CD4-positive, alpha-beta T cell (primary cell): ENCODE measurements at regions of chr4 and their contacts with region 1.

Region 1: GRCh38 chr4:129093191-129093920 is at the start of gene SCLT1:
- DNase-seq: peak; percentile 87 to 98 (median 93)
- ATAC-seq: peak; percentile 90
- H3K4me3 ChIP-seq: peak within 1 kb of the TSS; percentile 88
- H3K4me3 Mint-ChIP-seq: no peak within 1 kb of the TSS
- H3K27ac ChIP-seq: peak within 1 kb of the TSS; percentile 92 to 97
- H3K27ac Mint-ChIP-seq: no peak within 1 kb of the TSS
- H3K4me1 ChIP-seq: peaks cover 16% of the 10 kb centered on the region
- H3K4me1 Mint-ChIP-seq: peaks cover 45% of the 10 kb centered on the region
- H3K27me3 ChIP-seq: no peaks in the 10 kb centered on the region
- H3K27me3 Mint-ChIP-seq: no peaks in the 10 kb centered on the region
- CTCF ChIP-seq: no peak
- total RNA-seq, gene SCLT1: 21.8 to 21.9 TPM

Region 2: DNA sequence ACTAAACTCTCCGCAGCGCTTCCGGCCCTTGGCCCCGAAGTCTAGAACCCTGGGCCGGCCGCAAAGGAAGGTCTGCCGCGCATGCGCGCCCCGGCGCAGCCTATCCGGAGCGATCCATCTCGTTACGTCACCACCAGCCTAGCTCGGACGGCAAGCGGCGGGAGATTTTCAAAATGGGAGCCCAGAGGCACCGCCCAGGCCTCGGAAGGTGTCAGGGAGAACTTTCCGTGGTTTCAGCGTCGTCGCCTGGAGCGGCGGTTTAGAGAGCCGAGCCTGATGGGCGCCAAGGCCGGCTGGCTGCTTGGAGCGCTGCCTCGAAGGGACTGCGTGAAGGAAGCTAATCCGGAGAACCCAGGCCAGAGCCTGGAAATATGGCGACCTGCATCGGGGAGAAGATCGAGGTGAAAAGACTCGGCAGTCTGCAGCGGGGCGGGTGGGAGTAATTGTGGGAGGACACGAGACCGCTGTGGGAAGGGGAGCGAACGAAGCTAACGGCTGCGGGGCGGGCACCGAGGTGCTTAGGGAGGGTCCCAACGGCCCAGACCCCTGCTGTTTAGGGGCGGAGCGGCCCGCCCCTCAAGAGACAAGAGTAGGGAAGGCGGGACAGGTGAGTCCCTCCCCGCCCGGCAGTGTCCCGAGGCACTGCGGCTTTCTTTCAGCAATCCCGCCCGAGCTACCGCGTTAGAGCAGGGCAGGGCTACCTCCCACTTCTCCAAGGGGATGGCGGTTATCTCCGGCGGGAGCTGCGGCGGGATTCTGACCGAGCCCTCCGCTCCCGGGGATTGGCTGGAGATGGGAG is 1212.4 kb before region 1 on chr4 and contains the start of gene PLK4:
- CTCF ChIA-PET with region 1: no interaction called
- POLR2A ChIA-PET with region 1: no interaction called
- intact Hi-C with region 1: loop called in 1 of 2 experiments (anchors 5 kb)
- DNase-seq: peak; percentile 86 to 97 (median 92)
- ATAC-seq: peak; percentile 89
- H3K4me3 ChIP-seq: peak within 1 kb of the TSS; percentile 80
- H3K4me3 Mint-ChIP-seq: peak within 1 kb of the TSS; percentile 95
- H3K27ac ChIP-seq: peak within 1 kb of the TSS; percentile 73 to 76
- H3K27ac Mint-ChIP-seq: peak within 1 kb of the TSS; percentile 99
- H3K4me1 ChIP-seq: peaks cover 11% of the 10 kb centered on the region
- H3K4me1 Mint-ChIP-seq: peaks cover 29% of the 10 kb centered on the region
- H3K27me3 ChIP-seq: no peaks in the 10 kb centered on the region
- H3K27me3 Mint-ChIP-seq: no peaks in the 10 kb centered on the region
- CTCF ChIP-seq: no peak
- total RNA-seq, gene PLK4: 2.7 to 3.4 TPM

Region 3: GRCh38 chr4:128060699-128061565 is 1032.4 kb before region 1 on chr4 and contains the start of gene LARP1B:
- CTCF ChIA-PET with region 1: no interaction called
- POLR2A ChIA-PET with region 1: interaction called, 6 read pairs
- intact Hi-C with region 1: loop called in 1 of 2 experiments (anchors 2 kb)
- DNase-seq: peak; percentile 81 to 96 (median 90)
- ATAC-seq: peak; percentile 89
- H3K4me3 ChIP-seq: peak within 1 kb of the TSS; percentile 64
- H3K4me3 Mint-ChIP-seq: peak within 1 kb of the TSS; percentile 93
- H3K27ac ChIP-seq: peak within 1 kb of the TSS; percentile 60 to 70
- H3K27ac Mint-ChIP-seq: peak within 1 kb of the TSS; percentile 89
- H3K4me1 ChIP-seq: peaks cover 23% of the 10 kb centered on the region
- H3K4me1 Mint-ChIP-seq: peaks cover 6% of the 10 kb centered on the region
- H3K27me3 ChIP-seq: no peaks in the 10 kb centered on the region
- H3K27me3 Mint-ChIP-seq: no peaks in the 10 kb centered on the region
- CTCF ChIP-seq: no peak
- total RNA-seq, gene LARP1B: 8.4 to 8.9 TPM

Region 4: DNA sequence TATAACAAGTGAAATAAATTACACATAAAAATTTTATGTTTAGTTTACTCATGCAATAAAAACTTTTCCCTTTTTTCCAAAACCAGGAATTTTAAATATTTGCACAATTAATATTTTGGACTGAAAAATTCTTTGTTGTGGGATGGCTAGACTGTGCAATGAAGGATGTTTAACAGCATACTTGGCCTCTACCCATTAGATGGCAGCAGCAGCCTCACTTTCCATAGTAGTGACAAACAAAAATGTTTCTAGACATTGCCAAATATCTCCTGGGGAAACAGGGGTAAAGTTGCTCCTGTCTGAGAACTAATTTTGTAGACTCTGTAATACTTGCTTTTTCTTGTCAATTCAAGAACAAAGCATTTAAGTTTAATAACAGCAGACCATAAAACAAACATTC is 49.8 kb before region 1 on chr4:
- CTCF ChIA-PET with region 1: no interaction called
- POLR2A ChIA-PET with region 1: interaction called, 3 read pairs
- intact Hi-C with region 1: loop called in 1 of 2 experiments (anchors 10 kb)
- DNase-seq: peak in 2 of 14 experiments; percentile 6 to 13
- ATAC-seq: no peak
- H3K4me3 ChIP-seq: no peak overlapping the region
- H3K4me3 Mint-ChIP-seq: no peak overlapping the region
- H3K27ac ChIP-seq: no peak overlapping the region
- H3K27ac Mint-ChIP-seq: no peak overlapping the region
- H3K4me1 ChIP-seq: no peaks in the 10 kb centered on the region
- H3K4me1 Mint-ChIP-seq: peaks cover 12% of the 10 kb centered on the region
- H3K27me3 ChIP-seq: no peaks in the 10 kb centered on the region
- H3K27me3 Mint-ChIP-seq: no peaks in the 10 kb centered on the region
- CTCF ChIP-seq: no peak